ENCODE measurements at regions of chrX and their contacts with region 1.

Region 1: GRCh38 chrX:128816919-128817318 is 706.4 kb downstream of the SMARCA1 start:
- DNase-seq: peak in 1 of 3 donors; percentile 5
- ATAC-seq: no peak
- H3K4me3 ChIP-seq: no peak overlapping the region
- H3K4me1 ChIP-seq: no peaks in the 10 kb centered on the region
- CTCF ChIP-seq: no peak

Region 2: GRCh38 chrX:128975745-128976144 is 158.8 kb after region 1 on chrX:
- intact Hi-C with region 1: loop called in 1 of 2 experiments (anchors 10 kb)
- DNase-seq: peak in 2 of 3 donors; percentile 51 to 59
- ATAC-seq: peak; percentile 79
- H3K4me3 ChIP-seq: no peak overlapping the region
- H3K4me1 ChIP-seq: no peaks in the 10 kb centered on the region
- CTCF ChIP-seq: no peak

Region 3: DNA sequence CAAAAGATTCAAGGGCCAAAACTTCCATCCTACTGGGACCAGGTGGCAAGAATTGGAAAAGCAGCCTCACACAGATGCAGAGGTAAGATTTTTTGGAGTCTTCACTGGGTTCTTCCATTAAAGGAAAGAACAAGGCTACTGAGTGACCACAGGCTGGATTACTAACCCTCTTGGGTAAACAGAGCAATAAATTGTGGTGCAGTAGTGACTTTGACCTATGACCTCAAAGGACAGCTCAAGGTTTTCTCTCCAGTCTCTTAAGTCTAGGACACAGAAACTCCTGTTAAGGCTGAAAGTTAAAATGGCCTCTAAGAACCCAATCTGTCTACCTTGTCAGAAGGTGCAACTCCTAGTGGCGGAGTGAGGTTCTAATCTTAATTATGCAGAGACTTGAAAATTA is 241.5 kb after region 1 on chrX:
- intact Hi-C with region 1: no loop called
- DNase-seq: no peak
- ATAC-seq: no peak
- H3K4me3 ChIP-seq: no peak overlapping the region
- H3K4me1 ChIP-seq: no peaks in the 10 kb centered on the region
- CTCF ChIP-seq: no peak